GM12878 (cell line): ENCODE measurements at regions of chr10 and their contacts with region 1.

Region 1: GRCh38 chr10:93376372-93377293 is 105.5 kb downstream of the MYOF start:
- DNase-seq: peak; percentile 31
- ATAC-seq: peak; percentile 93
- H3K4me3 ChIP-seq: no peak overlapping the region
- H3K27ac ChIP-seq: no peak overlapping the region
- H3K4me1 ChIP-seq: no peaks in the 10 kb centered on the region
- H3K27me3 ChIP-seq: peaks cover 0 to 2% of the 10 kb centered on the region in 2 experiments; a peak in 1 of 4 replicates
- CTCF ChIP-seq: peak; percentile 87 to 93 (median 92); a peak in 5 of 6 replicates
- EP300 ChIP-seq: no peak
- POLR2A ChIP-seq: no peak
- RAD21 ChIP-seq: peak; percentile 99

Region 2: DNA sequence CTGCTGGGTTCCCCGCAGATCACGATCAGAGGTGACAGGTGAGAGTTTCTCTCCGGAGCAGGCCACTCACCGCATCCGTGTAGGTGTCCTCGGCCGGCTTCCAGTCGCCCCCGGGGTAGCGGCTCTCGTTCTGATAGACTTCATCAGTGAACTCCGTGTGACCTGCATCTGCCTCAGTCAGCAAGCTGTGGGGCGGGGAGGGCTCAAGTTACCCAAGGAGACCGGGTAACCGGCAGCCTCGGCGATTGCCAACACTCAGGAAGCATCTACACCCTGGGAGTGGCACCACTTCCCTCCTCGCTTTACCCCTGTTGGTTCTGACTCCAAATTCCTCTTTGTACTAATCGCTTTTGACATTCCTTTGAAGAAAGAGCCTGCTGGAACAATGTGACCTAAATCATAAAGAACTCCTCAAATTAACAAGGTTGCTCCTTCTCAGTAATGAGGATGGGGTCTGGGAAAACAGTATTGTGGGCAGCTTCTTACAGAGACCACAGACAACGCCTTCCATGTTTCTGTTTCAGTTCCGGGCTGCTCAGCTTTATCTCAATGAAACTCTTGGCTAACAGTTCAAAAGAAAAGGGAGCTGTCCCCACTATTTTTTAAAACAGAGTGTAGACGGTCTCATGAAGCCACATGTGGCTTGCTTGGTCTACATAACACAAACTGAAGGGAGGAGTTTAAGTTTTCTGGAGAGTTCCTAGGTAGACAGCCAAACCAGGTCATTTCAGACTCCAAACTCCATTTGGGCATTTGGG is 12.6 kb before region 1 on chr10:
- CTCF ChIA-PET with region 1: interaction called, 30 read pairs
- POLR2A ChIA-PET with region 1: interaction called, 4 read pairs
- RAD21 ChIA-PET with region 1: interaction called, 3 read pairs
- SMC1A ChIA-PET with region 1: interaction called, 8 read pairs
- in situ Hi-C with region 1: no loop called
- intact Hi-C with region 1: no loop called
- DNase-seq: no peak
- ATAC-seq: no peak
- H3K4me3 ChIP-seq: no peak overlapping the region
- H3K27ac ChIP-seq: no peak overlapping the region
- H3K4me1 ChIP-seq: no peaks in the 10 kb centered on the region
- H3K27me3 ChIP-seq: no peaks in the 10 kb centered on the region
- CTCF ChIP-seq: no peak
- EP300 ChIP-seq: no peak
- POLR2A ChIP-seq: no peak
- RAD21 ChIP-seq: no peak

Region 3: DNA sequence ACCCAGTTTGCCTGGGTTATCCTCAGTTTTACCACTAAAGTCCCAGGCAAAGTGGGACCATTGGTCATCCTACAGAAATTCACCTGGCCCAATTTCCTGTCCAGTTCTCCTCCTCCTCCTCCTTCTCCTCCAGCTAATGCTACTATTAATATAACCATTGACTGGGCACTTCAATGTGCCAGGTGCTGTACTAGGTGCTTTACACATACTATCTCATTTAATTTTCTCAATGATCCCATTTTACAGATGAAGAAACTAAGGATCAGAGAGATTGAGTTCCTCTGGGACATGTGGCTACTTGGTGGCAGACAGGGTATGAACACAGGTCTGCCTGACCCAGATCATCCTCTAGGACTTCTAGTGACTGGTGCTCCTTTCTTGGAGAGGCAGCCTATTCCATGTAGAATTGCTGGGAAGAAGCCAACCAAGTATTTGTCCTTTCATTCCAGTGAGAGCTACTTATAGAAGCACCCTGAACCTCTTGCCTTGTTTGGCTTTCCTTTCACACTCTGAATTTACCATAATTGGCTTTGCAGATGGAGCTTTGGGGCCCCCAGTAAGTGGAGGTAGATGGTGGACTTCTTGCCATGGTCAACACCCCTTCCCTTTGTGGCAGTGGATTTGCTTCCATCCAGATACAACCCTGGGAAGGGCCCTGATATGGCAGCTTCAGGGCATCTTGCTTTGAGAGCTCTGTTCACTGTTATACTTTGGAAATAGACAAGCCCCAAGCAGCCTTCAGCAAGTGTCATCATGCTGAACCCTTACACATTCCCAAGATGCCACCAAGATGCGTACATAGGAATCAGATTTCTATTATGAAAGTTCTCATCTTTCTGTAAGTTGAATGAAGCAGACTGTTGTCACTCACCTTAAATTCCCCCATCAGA is 26.8 kb after region 1 on chr10:
- CTCF ChIA-PET with region 1: interaction called, 10 read pairs
- POLR2A ChIA-PET with region 1: no interaction called
- RAD21 ChIA-PET with region 1: interaction called, 4 read pairs
- SMC1A ChIA-PET with region 1: no interaction called
- in situ Hi-C with region 1: no loop called
- intact Hi-C with region 1: no loop called
- DNase-seq: no peak
- ATAC-seq: no peak
- H3K4me3 ChIP-seq: no peak overlapping the region
- H3K27ac ChIP-seq: no peak overlapping the region
- H3K4me1 ChIP-seq: no peaks in the 10 kb centered on the region
- H3K27me3 ChIP-seq: peaks cover 0 to 3% of the 10 kb centered on the region in 2 experiments; a peak in 1 of 4 replicates
- CTCF ChIP-seq: no peak
- EP300 ChIP-seq: no peak
- POLR2A ChIP-seq: no peak
- RAD21 ChIP-seq: no peak

Region 4: GRCh38 chr10:93503075-93503474 is 126.4 kb after region 1 on chr10:
- CTCF ChIA-PET with region 1: interaction called, 232 read pairs
- POLR2A ChIA-PET with region 1: no interaction called
- RAD21 ChIA-PET with region 1: interaction called, 8 read pairs
- SMC1A ChIA-PET with region 1: interaction called, 86 read pairs
- in situ Hi-C with region 1: no loop called
- intact Hi-C with region 1: no loop called
- DNase-seq: peak; percentile 33
- ATAC-seq: peak; percentile 86
- H3K4me3 ChIP-seq: peak overlapping the region; percentile 19
- H3K27ac ChIP-seq: peak overlapping the region; percentile 75
- H3K4me1 ChIP-seq: peaks cover 3% of the 10 kb centered on the region; the same call in 1 of the 2 replicates
- H3K27me3 ChIP-seq: no peaks in the 10 kb centered on the region
- CTCF ChIP-seq: no peak
- EP300 ChIP-seq: no peak
- POLR2A ChIP-seq: no peak
- RAD21 ChIP-seq: no peak

Region 5: DNA sequence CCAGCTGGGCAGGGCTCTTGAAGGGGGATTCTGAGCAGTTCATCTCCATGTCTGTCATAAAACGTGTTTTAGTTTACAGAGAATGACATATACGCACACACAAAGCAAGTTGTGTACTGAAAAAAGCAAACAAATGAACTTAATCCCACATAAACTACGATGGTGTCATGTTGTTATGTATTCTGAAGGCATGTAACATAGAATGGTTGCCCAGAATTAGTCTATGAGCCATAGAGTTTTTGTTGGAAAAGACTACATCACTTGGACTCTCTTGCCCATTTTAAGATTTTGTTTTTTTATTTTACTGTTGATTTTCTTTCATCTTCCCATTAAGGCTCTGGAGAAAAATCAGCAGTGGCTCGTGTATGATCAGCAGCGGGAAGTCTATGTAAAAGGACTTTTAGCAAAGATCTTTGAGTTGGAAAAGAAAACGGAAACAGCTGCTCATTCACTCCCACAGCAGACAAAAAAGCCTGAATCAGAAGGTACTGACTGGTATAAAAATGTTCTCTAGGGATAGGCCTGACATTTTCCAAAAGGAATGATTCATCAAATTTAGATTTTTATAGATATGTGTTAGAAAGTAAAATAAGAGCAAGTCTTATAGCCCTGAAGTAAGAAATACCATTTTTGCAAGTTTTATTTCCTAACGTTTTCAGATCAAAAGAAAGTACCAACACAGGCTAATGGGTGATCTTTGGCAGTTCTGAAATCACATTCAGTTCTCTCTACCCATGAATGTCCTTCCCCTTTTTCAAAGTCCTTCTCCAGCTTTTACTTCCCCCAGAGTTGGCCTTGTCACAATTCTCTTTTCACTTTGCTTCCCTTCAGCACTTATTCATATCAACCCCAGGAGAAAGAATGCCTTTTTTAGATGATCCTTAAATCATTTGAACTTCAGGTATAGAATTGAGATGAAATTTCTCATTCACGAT is 138.7 kb after region 1 on chr10:
- CTCF ChIA-PET with region 1: interaction called, 232 read pairs
- POLR2A ChIA-PET with region 1: interaction called, 3 read pairs
- RAD21 ChIA-PET with region 1: interaction called, 67 read pairs
- SMC1A ChIA-PET with region 1: interaction called, 86 read pairs
- in situ Hi-C with region 1: no loop called
- intact Hi-C with region 1: loop called (anchors 1 kb)
- DNase-seq: no peak
- ATAC-seq: no peak
- H3K4me3 ChIP-seq: no peak overlapping the region
- H3K27ac ChIP-seq: no peak overlapping the region
- H3K4me1 ChIP-seq: no peaks in the 10 kb centered on the region
- H3K27me3 ChIP-seq: no peaks in the 10 kb centered on the region
- CTCF ChIP-seq: no peak
- EP300 ChIP-seq: no peak
- POLR2A ChIP-seq: no peak
- RAD21 ChIP-seq: no peak